ENCODE measurements at regions of chr17 and their contacts with region 1.

Region 1: GRCh38 chr17:45341533-45342158 is 24.8 kb upstream of the MAP3K14 start:
- DNase-seq: no peak
- H3K4me3 Mint-ChIP-seq: no peak overlapping the region
- H3K27ac Mint-ChIP-seq: no peak overlapping the region
- H3K4me1 Mint-ChIP-seq: no peaks in the 10 kb centered on the region
- H3K27me3 Mint-ChIP-seq: peaks cover 6% of the 10 kb centered on the region

Region 2: GRCh38 chr17:45060797-45061605 is 280.6 kb before region 1 on chr17 and contains the start of gene NMT1:
- intact Hi-C with region 1: no loop called
- DNase-seq: peak; percentile 97
- H3K4me3 Mint-ChIP-seq: peak within 1 kb of the TSS; percentile 99
- H3K27ac Mint-ChIP-seq: peak within 1 kb of the TSS; percentile 100
- H3K4me1 Mint-ChIP-seq: peaks cover 25% of the 10 kb centered on the region
- H3K27me3 Mint-ChIP-seq: no peaks in the 10 kb centered on the region
- total RNA-seq, gene NMT1: 165 and 173 TPM in 2 replicates

Region 3: GRCh38 chr17:45307290-45308015 is 34.2 kb before region 1 on chr17:
- intact Hi-C with region 1: no loop called
- DNase-seq: peak; percentile 55
- H3K4me3 Mint-ChIP-seq: peak overlapping the region; percentile 13
- H3K27ac Mint-ChIP-seq: peak overlapping the region; percentile 85
- H3K4me1 Mint-ChIP-seq: peaks cover 77% of the 10 kb centered on the region
- H3K27me3 Mint-ChIP-seq: no peaks in the 10 kb centered on the region

Region 4: GRCh38 chr17:45371414-45372327 is 30.0 kb after region 1 on chr17:
- intact Hi-C with region 1: loop called (anchors 5 kb)
- DNase-seq: no peak
- H3K4me3 Mint-ChIP-seq: peak overlapping the region; percentile 35
- H3K27ac Mint-ChIP-seq: no peak overlapping the region
- H3K4me1 Mint-ChIP-seq: peaks cover 16% of the 10 kb centered on the region
- H3K27me3 Mint-ChIP-seq: peaks cover 10% of the 10 kb centered on the region

Measured in activated T-helper 2 cell treated with anti-CD3 and anti-CD28 coated beads, Interferon-gamma antibody, Interleukin-2, Interleukin-4, amounts not matched to agents 10 μg/mL and 5 μg/mL and 100 μg/mL, durations not matched to agents 14 hours and 24 hours and 36 hours (primary cell).